Naive thymus-derived CD4-positive, alpha-beta T cell (primary cell): ENCODE measurements at regions of chr19 and their contacts with region 1.

Region 1: GRCh38 chr19:7197760-7198696 is 96.2 kb downstream of the INSR start:
- DNase-seq: peak; percentile 91 to 95 (median 94)
- ATAC-seq: peak; percentile 92
- H3K4me3 ChIP-seq: peak overlapping the region; percentile 75
- H3K4me3 Mint-ChIP-seq: peak overlapping the region; percentile 88 to 99 (median 94)
- H3K27ac ChIP-seq: peak overlapping the region; percentile 71
- H3K27ac Mint-ChIP-seq: peak overlapping the region; percentile 95 to 100 (median 97)
- H3K4me1 ChIP-seq: peaks cover 12 to 15% of the 10 kb centered on the region in 2 donors
- H3K4me1 Mint-ChIP-seq: peaks cover 0 to 20% (median 14%) of the 10 kb centered on the region in 7 donors
- H3K27me3 ChIP-seq: no peaks in the 10 kb centered on the region
- H3K27me3 Mint-ChIP-seq: peaks cover 0 to 47% (median 0%) of the 10 kb centered on the region in 5 donors

Region 2: GRCh38 chr19:6279931-6280591 is 918.0 kb before region 1 on chr19 and contains the start of gene MLLT1:
- CTCF ChIA-PET with region 1: no interaction called
- POLR2A ChIA-PET with region 1: no interaction called
- intact Hi-C with region 1: loop called in 1 of 2 experiments (anchors 5 kb)
- DNase-seq: peak; percentile 88 to 98 (median 90)
- ATAC-seq: peak; percentile 96
- H3K4me3 ChIP-seq: peak within 1 kb of the TSS; percentile 54
- H3K4me3 Mint-ChIP-seq: peak within 1 kb of the TSS; percentile 85 to 97 (median 92)
- H3K27ac ChIP-seq: peak within 1 kb of the TSS; percentile 78
- H3K27ac Mint-ChIP-seq: peak within 1 kb of the TSS; percentile 87 to 95 (median 93)
- H3K4me1 ChIP-seq: peaks cover 3 to 20% of the 10 kb centered on the region in 2 donors
- H3K4me1 Mint-ChIP-seq: peaks cover 30 to 42% (median 39%) of the 10 kb centered on the region in 7 donors
- H3K27me3 ChIP-seq: no peaks in the 10 kb centered on the region
- H3K27me3 Mint-ChIP-seq: peaks cover 0 to 6% (median 0%) of the 10 kb centered on the region in 5 donors
- total RNA-seq, gene MLLT1: 33.3 to 47.5 (median 39.0) TPM

Region 3: DNA sequence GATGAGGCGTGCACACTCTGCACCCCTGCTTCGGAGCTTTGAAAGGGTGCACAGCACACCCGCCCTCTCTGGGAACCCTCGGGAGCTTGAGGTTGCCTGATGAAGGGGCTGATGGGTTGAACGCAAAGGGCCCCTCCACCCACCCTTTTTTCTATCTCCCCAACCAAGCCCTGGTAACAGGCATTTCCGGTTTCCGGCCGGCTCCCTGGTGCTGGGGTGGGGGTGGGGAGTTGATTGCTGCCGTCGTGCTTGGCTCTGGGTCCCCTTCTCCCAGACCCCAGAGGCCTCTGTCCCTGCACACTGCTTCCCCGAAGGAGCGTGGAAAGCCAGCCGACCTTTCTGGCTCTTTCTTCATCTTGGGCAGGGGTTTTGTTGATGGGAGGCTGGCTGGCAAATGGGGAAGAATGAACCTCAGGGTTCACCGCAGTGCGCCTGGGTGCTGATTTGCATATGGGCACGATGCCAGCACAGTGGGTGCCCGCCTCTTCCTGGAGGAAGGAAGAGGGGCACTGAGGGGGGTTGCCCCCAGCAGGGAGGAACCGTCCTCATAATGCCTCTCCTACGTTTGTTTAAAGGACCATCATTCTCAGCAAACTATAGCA is 396.4 kb before region 1 on chr19:
- CTCF ChIA-PET with region 1: no interaction called
- POLR2A ChIA-PET with region 1: no interaction called
- intact Hi-C with region 1: loop called in 1 of 2 experiments (anchors 5 kb)
- DNase-seq: peak; percentile 58 to 90 (median 85)
- ATAC-seq: peak; percentile 78
- H3K4me3 ChIP-seq: peak overlapping the region; percentile 67
- H3K4me3 Mint-ChIP-seq: peak overlapping the region; percentile 87 to 99 (median 94)
- H3K27ac ChIP-seq: peak overlapping the region; percentile 85
- H3K27ac Mint-ChIP-seq: peak overlapping the region; percentile 93 to 99 (median 97)
- H3K4me1 ChIP-seq: peaks cover 28 to 35% of the 10 kb centered on the region in 2 donors
- H3K4me1 Mint-ChIP-seq: peaks cover 46 to 85% (median 68%) of the 10 kb centered on the region in 7 donors
- H3K27me3 ChIP-seq: no peaks in the 10 kb centered on the region
- H3K27me3 Mint-ChIP-seq: no peaks in the 10 kb centered on the region

Region 4: DNA sequence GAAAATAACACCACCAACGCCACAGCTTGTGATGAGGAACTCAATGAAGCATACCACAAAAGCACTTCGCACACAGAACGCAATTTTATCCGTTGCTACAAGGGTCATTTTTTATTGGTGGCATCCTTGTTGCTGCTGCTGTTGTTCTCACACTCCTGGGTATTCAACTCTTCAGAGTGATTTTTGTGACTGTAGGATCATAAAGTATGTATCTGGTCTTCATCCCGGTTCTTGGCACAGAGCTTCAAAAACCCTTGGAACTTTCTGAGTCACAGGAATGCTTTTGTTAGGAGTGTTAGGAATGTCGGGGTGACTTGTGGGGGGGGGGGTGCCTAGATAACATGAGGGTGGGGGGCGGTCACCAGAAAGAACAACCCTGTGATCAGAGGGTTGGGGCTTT is 20.1 kb before region 1 on chr19:
- CTCF ChIA-PET with region 1: interaction called, 3 read pairs
- POLR2A ChIA-PET with region 1: interaction called, 4 read pairs
- intact Hi-C with region 1: loop called in 1 of 2 experiments (anchors 1 kb)
- DNase-seq: no peak
- ATAC-seq: no peak
- H3K4me3 ChIP-seq: no peak overlapping the region
- H3K4me3 Mint-ChIP-seq: no peak overlapping the region
- H3K27ac ChIP-seq: no peak overlapping the region
- H3K27ac Mint-ChIP-seq: no peak overlapping the region
- H3K4me1 ChIP-seq: peaks cover 4 to 8% of the 10 kb centered on the region in 2 donors
- H3K4me1 Mint-ChIP-seq: peaks cover 4 to 16% (median 11%) of the 10 kb centered on the region in 7 donors
- H3K27me3 ChIP-seq: no peaks in the 10 kb centered on the region
- H3K27me3 Mint-ChIP-seq: no peaks in the 10 kb centered on the region

Region 5: DNA sequence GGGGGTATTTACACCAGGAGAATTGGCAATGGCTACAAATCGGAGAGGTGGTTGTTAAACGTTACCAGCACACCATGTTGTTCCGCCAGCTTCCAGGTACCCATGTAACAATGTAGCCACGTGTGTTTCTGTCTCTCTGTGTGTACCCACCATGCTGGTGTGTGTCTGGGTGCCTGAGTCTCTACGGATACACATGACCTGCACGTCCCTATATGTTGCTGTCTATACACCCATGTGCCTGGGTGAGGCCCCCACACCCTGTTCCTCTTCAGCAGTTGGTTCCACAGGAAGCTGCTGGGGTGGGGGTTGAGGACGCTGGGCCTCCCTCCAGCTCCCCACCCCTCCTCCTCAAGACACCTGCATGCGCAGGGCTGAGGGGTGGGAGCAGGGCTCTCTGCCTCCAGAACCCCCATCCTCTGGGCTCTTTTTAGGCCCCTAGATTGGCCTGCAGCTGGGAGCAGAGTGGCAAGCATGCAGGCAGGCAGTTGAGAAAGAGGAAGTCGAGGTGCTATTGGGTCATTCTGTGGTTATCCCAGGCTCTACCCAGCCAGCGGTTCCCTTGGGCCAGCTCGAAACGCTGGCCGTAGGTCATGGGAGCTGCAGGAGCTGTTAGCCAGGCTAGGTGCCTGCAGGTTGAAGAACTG is 150.7 kb after region 1 on chr19 and contains the start of gene ARHGEF18:
- CTCF ChIA-PET with region 1: no interaction called
- POLR2A ChIA-PET with region 1: interaction called, 8 read pairs
- intact Hi-C with region 1: loop called (anchors 2 to 5 kb)
- DNase-seq: peak in 8 of 9 donors; percentile 40 to 89 (median 84)
- ATAC-seq: peak; percentile 77
- H3K4me3 ChIP-seq: peak within 1 kb of the TSS; percentile 99
- H3K4me3 Mint-ChIP-seq: peak within 1 kb of the TSS; percentile 83 to 100 (median 99)
- H3K27ac ChIP-seq: peak within 1 kb of the TSS; percentile 74
- H3K27ac Mint-ChIP-seq: peak within 1 kb of the TSS; percentile 86 to 100 (median 98)
- H3K4me1 ChIP-seq: peaks cover 28 to 44% of the 10 kb centered on the region in 2 donors
- H3K4me1 Mint-ChIP-seq: peaks cover 22 to 78% (median 62%) of the 10 kb centered on the region in 7 donors
- H3K27me3 ChIP-seq: no peaks in the 10 kb centered on the region
- H3K27me3 Mint-ChIP-seq: no peaks in the 10 kb centered on the region
- total RNA-seq, gene ARHGEF18: 53.0 to 132 (median 130) TPM

Region 6: GRCh38 chr19:8307965-8308866 is 1110.2 kb after region 1 on chr19 and contains the start of gene CD320:
- CTCF ChIA-PET with region 1: no interaction called
- POLR2A ChIA-PET with region 1: no interaction called
- intact Hi-C with region 1: loop called in 1 of 2 experiments (anchors 10 kb)
- DNase-seq: peak; percentile 84 to 90 (median 89)
- ATAC-seq: peak; percentile 95
- H3K4me3 ChIP-seq: peak within 1 kb of the TSS; percentile 83
- H3K4me3 Mint-ChIP-seq: peak within 1 kb of the TSS; percentile 90 to 97 (median 92)
- H3K27ac ChIP-seq: peak within 1 kb of the TSS; percentile 89
- H3K27ac Mint-ChIP-seq: peak within 1 kb of the TSS; percentile 79 to 98 (median 94)
- H3K4me1 ChIP-seq: peaks cover 20 to 22% of the 10 kb centered on the region in 2 donors
- H3K4me1 Mint-ChIP-seq: peaks cover 18 to 38% (median 35%) of the 10 kb centered on the region in 7 donors
- H3K27me3 ChIP-seq: no peaks in the 10 kb centered on the region
- H3K27me3 Mint-ChIP-seq: no peaks in the 10 kb centered on the region
- total RNA-seq, gene CD320: 20.5 to 52.0 (median 27.2) TPM